HCT116 (cell line): ENCODE measurements at regions of chr1 and their contacts with region 1.

Region 1: DNA sequence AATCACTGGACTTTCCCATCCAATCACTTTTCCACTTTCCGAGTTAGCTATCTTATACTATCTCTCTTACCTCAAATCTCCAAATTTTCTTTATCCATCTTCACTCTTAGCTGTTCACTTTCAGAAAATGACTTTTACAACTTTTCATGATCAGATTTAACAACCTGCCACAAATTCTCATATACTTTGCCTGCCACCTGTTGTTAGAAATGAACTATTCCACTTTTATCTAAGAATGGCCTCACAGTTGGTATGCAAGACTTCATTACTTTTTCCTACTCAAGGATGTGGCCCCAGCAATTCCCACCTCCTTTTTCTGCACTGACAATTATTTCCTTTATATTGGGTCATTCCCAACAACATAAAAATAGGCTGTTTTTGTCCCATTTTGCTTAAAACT is 93.6 kb upstream of the DEPDC1 start:
- DNase-seq: no peak
- ATAC-seq: no peak
- H3K4me3 ChIP-seq: no peak overlapping the region
- H3K27ac ChIP-seq: no peak overlapping the region
- H3K4me1 ChIP-seq: no peaks in the 10 kb centered on the region
- H3K27me3 ChIP-seq: no peaks in the 10 kb centered on the region
- CTCF ChIP-seq: peak in 2 of 3 experiments; percentile 17 to 42; a peak in 2 of 6 replicates
- POLR2A ChIP-seq: no peak
- RAD21 ChIP-seq: peak; percentile 67

Region 2: DNA sequence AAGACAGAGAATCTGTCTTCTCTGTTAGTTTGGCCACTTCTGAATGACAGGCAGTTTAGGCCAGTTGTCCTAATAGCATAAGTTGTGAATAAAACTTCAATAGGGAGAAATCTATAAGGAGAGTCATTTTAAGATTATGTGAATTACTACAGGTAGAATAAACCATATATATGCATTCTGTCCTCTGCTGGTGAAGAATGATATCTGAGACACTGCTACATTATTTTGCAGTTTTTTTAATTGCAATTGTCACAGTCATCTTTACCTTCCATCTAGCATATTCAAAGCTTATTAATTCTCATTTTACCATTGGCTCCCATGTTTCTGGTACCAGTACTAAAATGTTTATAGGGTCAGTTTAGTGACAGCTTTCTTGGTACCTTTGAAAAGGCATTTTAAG is 426.0 kb after region 1 on chr1:
- CTCF ChIA-PET with region 1: no interaction called
- POLR2A ChIA-PET with region 1: no interaction called
- RAD21 ChIA-PET with region 1: no interaction called
- intact Hi-C with region 1: loop called (anchors 10 kb)
- DNase-seq: no peak
- ATAC-seq: no peak
- H3K4me3 ChIP-seq: no peak overlapping the region
- H3K27ac ChIP-seq: no peak overlapping the region
- H3K4me1 ChIP-seq: no peaks in the 10 kb centered on the region
- H3K27me3 ChIP-seq: no peaks in the 10 kb centered on the region
- CTCF ChIP-seq: peak in 2 of 3 experiments; percentile 14 to 44; a peak in 3 of 6 replicates
- POLR2A ChIP-seq: no peak
- RAD21 ChIP-seq: peak; percentile 27; the same call in 1 of the 2 replicates